Breast epithelium (tissue), 4 donors: ENCODE measurements at regions of chr16 and their contacts with region 1.

Region 1: DNA sequence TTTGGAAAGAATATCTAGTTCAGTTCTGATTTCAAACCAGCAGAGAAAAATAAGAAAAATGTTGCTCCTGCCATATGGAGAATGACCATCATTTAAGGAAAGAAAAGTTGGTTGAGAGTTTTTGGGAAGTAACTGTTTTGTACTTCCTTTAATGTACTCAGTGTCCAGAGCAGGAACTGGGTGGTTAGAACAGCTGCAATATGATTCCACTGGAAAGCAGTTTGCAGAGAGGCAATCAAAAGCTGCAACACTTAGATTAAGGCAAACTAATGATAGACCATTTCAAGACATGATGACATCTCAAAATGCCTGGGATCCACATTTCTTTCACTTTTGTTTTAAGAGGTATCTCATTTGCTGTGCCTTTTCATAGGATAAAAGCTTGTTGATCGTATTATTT is 313.3 kb upstream of the HSBP1 start:
- DNase-seq: no peak
- H3K4me3 ChIP-seq: no peak overlapping the region
- H3K27ac ChIP-seq: no peak overlapping the region
- H3K4me1 ChIP-seq: no peaks in the 10 kb centered on the region
- H3K27me3 ChIP-seq: no peaks in the 10 kb centered on the region
- CTCF ChIP-seq: no peak
- POLR2A ChIP-seq: no peak

Region 2: GRCh38 chr16:82782715-82783251 is 711.7 kb before region 1 on chr16:
- intact Hi-C with region 1: loop called (anchors 5 kb)
- DNase-seq: no peak
- H3K4me3 ChIP-seq: no peak overlapping the region
- H3K27ac ChIP-seq: no peak overlapping the region
- H3K4me1 ChIP-seq: no peaks in the 10 kb centered on the region
- H3K27me3 ChIP-seq: peaks cover 0 to 7% of the 10 kb centered on the region in 2 donors
- CTCF ChIP-seq: no peak
- POLR2A ChIP-seq: no peak

Region 3: GRCh38 chr16:83402967-83403366 is 91.5 kb before region 1 on chr16:
- intact Hi-C with region 1: no loop called
- DNase-seq: no peak
- H3K4me3 ChIP-seq: no peak overlapping the region
- H3K27ac ChIP-seq: no peak overlapping the region
- H3K4me1 ChIP-seq: no peaks in the 10 kb centered on the region
- H3K27me3 ChIP-seq: peaks cover 0 to 9% of the 10 kb centered on the region in 2 donors
- CTCF ChIP-seq: no peak
- POLR2A ChIP-seq: no peak

Region 4: DNA sequence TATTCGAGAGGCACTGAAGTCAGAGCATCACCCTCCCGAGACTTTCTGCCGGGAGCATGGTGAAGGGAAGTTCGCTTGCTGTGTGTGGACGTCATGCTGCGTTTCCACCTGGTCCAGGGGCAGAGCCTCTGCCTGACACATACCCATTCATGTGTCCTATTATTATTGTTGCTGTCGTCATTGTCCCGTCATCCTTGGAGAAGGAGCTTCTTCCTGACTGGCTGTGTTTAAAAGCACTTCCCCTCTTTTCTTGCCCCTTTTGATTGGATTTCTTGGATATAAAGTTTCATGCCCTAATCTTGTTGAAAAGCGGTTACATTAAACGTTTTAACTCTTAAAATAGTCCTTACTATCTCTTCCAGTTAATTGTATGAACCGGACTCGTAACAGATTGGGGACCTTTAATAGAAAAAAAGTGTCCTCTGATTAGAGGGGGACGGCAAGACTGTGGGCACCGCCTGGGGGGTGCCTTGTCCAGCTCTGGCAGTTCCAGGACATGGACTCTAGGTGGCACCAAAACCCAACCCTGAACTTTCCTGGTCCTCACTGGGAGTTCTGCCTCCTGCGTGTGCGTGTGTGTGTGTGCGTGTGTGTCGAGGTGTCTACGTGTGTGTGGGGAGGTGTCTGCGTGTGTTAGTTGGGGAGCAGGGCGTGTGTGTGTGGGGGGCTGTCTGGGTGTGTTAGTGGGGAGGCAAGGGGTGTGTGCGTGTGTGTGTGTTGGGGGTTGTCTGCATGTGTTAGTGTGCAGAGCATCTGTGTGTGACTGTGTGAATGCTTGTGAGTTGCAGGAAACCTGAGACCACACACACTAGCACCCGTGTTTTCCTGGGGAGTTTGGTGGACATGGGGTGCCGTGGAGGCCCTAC is 1751.1 kb after region 1 on chr16:
- intact Hi-C with region 1: no loop called
- DNase-seq: peak in 1 of 2 donors; percentile 27
- H3K4me3 ChIP-seq: no peak overlapping the region
- H3K27ac ChIP-seq: no peak overlapping the region
- H3K4me1 ChIP-seq: no peaks in the 10 kb centered on the region
- H3K27me3 ChIP-seq: no peaks in the 10 kb centered on the region
- CTCF ChIP-seq: peak; percentile 52 to 86 (median 81)
- POLR2A ChIP-seq: no peak